Dendritic cell treated with granulocyte-macrophage colony-stimulating factor and Interleukin-4, amounts not matched to agents 40 ng/mL and 50 ng/mL, for 4 days (primary cell): ENCODE measurements at regions of chr15 and their contacts with region 1.

Region 1: DNA sequence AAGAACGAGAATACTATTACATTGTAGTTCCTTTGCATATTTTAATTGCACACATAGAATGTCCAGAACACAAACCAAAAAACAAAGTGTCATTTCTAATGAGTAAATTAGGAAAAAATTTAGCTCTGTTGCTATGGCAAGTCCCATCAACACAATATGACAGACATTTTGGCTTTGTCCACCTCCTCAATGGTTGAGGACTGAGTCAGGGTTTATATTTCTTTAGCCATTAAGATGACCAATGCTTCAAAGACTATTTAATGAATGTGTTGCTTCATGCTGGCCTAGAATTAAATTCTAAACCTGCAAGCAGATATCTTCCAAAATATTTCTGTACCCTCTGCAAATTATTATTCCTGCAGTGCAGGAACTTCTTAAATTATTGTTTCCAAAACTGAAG is 719.2 kb downstream of the NTRK3 start:
- H3K4me3 Mint-ChIP-seq: no peak overlapping the region
- H3K27ac Mint-ChIP-seq: no peak overlapping the region
- H3K4me1 Mint-ChIP-seq: no peaks in the 10 kb centered on the region
- H3K27me3 Mint-ChIP-seq: no peaks in the 10 kb centered on the region

Region 2: DNA sequence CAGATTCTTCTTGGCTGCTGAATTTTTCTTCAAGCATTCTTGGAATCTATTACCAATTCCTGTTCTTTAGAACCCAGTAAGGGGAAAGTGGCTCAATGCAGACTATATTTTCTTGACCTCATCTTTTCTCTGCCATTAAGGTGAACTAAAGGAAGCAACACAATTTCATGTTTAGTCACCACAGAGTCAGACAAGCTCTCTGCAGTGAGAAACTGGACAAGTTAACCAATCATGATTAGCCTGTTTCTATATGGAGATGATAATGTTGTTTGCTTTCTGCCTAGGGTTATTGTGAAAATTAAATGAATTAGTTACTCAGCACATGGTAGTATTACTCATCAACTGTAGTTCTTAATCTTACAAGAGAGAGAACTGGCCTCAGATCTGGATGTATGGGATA is 382.5 kb before region 1 on chr15:
- intact Hi-C with region 1: no loop called
- H3K4me3 Mint-ChIP-seq: no peak overlapping the region
- H3K27ac Mint-ChIP-seq: no peak overlapping the region
- H3K4me1 Mint-ChIP-seq: no peaks in the 10 kb centered on the region
- H3K27me3 Mint-ChIP-seq: no peaks in the 10 kb centered on the region

Region 3: GRCh38 chr15:87477793-87478686 is 59.3 kb before region 1 on chr15:
- intact Hi-C with region 1: loop called (anchors 10 kb)
- H3K4me3 Mint-ChIP-seq: no peak overlapping the region
- H3K27ac Mint-ChIP-seq: no peak overlapping the region
- H3K4me1 Mint-ChIP-seq: no peaks in the 10 kb centered on the region
- H3K27me3 Mint-ChIP-seq: no peaks in the 10 kb centered on the region